ENCODE measurements at regions of chr11 and their contacts with region 1.

Region 1: GRCh38 chr11:11958403-11959231 is 49.8 kb downstream of the DKK3 start:
- DNase-seq: no peak
- ATAC-seq: no peak

Region 2: DNA sequence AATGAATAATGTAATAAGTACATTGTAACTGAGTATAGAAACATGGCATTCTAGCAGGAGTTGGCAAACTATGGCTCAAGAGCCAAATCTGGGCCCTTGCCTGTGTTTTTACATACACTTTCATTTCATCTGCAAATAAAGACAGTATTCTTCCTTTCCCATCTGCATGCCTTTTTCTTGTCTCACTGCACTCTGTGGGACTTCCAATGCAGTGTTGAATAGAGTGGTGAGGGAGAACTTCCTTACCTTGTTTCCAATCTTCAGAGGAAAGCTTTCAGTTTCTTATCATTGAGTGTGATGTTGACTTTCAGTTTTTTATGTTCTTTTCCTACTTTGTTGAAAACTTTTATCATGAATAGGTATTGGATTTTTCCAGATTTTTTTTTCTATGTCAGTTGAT is 34.8 kb before region 1 on chr11:
- intact Hi-C with region 1: no loop called
- DNase-seq: no peak
- ATAC-seq: no peak

Region 3: DNA sequence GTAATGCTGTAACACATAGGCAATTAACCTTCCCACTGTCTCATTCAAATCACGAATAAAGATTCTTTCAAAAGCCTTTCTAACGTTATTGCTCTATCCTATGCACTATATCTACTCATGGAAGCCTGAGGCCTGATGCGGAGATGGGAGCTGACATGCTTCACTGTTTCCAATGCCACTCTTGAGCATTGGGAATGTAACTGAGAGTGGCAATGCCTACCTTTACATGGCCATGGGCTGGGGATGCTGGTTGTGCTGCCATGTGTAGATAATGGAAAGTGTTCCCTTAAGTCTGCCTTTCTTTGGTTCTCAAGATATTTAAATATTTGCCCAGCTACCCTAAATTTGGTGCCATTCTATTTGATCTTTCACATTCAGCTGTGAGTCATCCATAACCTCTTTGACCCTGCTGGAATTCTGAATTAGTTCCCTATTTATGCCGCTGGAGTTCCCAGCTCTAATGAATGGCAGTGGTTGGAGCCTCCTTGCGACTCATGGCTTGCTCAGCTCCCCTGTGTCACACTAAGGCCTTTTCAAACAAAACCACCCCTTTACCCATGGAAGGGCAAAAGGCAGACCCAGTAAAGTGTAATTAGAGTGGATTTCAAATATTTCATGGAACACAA is 71.2 kb after region 1 on chr11:
- intact Hi-C with region 1: loop called (anchors 10 kb)
- DNase-seq: no peak
- ATAC-seq: no peak

Measured in sciatic nerve (tissue), 2 donors.